Ovary (tissue), 10 donors: ENCODE measurements at regions of chr4 and their contacts with region 1.

Region 1: DNA sequence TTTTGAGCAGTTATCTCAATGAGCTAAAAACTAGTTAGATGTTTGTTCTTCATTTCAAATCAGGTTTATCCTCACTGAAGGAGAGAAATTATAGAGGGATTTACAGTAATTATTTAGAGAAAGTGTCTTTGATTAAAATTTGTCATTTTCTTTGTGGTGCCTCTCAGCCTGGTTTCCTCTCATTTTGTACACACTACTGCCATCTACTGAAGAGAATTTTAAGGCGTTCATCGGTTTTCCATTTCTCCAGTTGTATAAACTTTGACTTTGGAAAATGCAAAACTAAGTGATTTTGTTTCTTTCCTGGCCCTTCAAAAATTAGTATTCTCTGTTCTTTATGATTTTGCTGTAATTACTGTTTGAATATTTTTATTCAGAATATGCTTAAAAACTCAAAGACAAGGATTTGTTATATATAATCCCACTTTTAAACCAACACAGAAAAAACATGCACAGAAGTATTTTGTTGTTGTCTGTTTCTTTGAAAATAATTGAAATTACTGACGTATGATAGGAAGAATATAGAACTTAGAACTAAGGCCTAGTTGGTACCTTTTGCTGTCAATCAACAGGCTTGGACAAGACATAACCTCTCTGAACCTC is 34.4 kb upstream of the ANXA3 start:
- DNase-seq: no peak
- H3K4me3 ChIP-seq: no peak overlapping the region
- H3K27ac ChIP-seq: no peak overlapping the region
- H3K4me1 ChIP-seq: no peaks in the 10 kb centered on the region
- H3K27me3 ChIP-seq: no peaks in the 10 kb centered on the region
- CTCF ChIP-seq: peak in 1 of 3 donors; percentile 15
- EP300 ChIP-seq: no peak
- POLR2A ChIP-seq: no peak

Region 2: DNA sequence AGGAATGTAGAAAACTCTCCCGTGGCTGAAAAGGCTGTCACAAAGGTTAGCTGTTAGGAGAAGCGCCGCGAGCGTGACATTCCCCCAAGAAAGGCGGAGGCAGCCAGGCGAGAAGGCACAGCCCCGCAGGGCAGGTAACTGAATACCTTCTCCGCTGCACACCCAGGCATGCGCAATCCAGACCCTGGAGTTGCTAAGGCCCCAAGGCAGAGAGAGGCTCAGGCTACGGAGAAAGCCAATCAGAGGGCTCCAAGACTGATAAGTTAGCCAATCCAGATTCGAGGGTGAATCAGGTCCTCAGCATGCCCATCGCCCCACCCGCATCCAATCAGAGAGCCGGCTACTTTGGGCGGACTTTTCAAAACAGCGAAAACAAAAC is 1360.6 kb before region 1 on chr4:
- intact Hi-C with region 1: no loop called
- DNase-seq: peak; percentile 93 to 97 (median 93)
- H3K4me3 ChIP-seq: peak overlapping the region; percentile 74
- H3K27ac ChIP-seq: peak overlapping the region; percentile 87 to 95
- H3K4me1 ChIP-seq: no peaks in the 10 kb centered on the region
- H3K27me3 ChIP-seq: no peaks in the 10 kb centered on the region
- CTCF ChIP-seq: no peak
- EP300 ChIP-seq: no peak
- POLR2A ChIP-seq: no peak

Region 3: DNA sequence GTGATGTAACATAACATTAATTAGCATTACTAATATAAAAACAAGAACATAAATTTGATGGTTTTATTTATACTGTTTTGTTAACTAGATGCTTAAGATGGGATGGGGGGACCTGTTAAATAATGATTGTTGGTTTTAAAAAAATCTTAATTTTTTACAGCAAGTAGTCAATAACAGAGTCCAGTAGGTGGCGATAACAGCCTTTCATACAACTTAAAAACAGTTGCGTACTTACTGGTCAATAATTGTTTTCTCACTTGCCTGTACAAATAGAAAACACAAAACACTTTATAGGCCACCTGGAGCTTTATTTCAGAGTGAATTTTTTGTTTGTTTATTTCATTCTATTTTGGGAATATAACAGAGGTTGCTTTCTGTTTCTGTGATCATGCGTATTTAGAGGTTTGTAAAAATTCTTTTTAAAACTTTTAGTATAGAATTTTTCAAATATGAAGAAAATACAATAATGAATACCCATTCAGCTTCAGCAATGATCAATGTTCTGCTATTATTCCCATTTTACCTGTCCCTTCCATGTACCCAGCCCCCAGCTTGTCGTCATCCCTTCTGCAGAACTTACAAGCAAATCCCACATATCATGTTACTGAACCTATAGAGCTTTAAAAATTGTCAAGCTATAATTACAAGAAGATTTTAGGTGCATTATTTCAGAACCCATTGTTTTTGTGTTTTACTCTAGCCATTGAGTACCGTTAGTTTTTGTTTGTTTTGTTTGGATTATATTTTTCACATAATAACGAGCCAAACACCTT is 557.4 kb before region 1 on chr4:
- intact Hi-C with region 1: loop called in 1 of 4 experiments (anchors 10 kb)
- DNase-seq: no peak
- H3K4me3 ChIP-seq: no peak overlapping the region
- H3K27ac ChIP-seq: no peak overlapping the region
- H3K4me1 ChIP-seq: no peaks in the 10 kb centered on the region
- H3K27me3 ChIP-seq: no peaks in the 10 kb centered on the region
- CTCF ChIP-seq: peak in 1 of 3 donors; percentile 35
- EP300 ChIP-seq: no peak
- POLR2A ChIP-seq: no peak